Left cardiac atrium (tissue), 4 donors: ENCODE measurements at regions of chr1 and their contacts with region 1.

Region 1: DNA sequence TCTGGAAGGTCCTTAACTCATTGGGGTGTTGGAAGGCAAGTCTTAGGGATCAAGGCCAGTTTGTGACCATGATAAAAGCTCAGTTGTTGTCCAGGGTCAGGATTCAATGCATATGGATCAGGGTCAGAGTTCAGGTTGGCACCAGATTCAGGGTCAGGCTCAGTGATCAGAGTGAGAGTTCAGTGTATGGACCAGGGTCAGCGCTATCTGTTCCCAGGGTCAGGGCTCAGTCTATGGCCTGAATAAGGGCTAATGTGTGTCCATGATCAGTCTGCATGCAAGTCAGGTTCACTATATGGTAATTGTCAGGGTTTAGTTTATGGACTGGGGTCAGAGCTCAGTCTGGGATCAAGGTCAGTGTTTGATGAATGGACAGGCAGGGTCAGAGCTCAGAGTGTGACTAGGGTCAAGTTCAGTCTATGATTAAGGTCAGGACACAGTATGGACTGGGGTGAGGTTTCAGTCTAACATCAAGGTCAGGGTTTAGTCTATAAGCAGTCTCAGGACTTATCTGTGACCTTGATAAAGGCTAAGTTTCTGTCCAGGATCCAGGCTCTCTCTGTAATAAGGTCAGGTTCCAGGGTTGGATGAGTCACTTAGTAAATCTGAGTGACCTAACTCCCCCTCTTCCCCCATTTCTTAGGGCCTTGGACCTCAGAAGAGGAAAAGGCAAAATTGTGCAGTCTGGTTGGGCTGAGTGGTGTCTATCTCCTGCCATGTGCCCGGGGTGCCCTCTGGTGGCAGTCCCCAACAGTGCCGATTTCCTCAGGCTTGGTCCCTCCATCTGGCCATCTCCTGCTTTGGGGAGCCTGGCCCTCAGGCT is 23.8 kb downstream of the KNCN start:
- DNase-seq: peak; percentile 79
- ATAC-seq: peak; percentile 79 to 86

Region 2: DNA sequence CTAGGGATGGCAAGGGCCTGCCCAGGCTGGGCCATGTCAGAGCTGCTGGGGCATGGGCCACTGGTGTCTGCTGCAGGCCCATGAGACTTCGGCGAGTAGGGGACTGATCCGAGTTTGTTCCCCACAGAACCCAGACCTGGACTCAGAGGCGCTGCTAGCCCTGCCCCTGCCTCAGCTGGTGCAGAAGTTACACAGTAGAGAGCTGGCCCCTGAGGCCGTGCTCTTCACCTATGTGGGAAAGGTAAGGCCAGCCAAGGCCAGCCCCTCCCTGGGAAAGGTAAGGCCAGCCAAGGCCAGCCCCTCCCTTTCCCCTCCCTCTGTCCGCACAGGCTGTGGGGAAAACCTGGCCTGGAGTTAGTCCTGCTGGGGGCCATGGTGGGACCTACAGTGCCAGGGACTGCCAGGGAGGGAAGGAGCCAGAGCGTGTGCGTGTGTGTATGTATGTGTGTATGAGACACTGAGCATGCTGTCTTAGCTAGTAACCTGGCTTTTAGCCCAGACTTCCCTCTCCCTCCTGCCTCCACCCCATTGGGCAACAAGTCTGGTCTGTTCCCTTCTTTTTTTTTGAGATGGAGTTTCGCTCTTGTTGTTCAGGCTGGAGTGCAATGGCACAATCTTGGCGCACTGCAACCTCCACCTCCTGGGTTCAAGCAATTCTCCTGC is 125.6 kb before region 1 on chr1:
- intact Hi-C with region 1: loop called (anchors 2 to 10 kb)
- DNase-seq: peak; percentile 61
- ATAC-seq: peak; percentile 85 to 88

Region 3: DNA sequence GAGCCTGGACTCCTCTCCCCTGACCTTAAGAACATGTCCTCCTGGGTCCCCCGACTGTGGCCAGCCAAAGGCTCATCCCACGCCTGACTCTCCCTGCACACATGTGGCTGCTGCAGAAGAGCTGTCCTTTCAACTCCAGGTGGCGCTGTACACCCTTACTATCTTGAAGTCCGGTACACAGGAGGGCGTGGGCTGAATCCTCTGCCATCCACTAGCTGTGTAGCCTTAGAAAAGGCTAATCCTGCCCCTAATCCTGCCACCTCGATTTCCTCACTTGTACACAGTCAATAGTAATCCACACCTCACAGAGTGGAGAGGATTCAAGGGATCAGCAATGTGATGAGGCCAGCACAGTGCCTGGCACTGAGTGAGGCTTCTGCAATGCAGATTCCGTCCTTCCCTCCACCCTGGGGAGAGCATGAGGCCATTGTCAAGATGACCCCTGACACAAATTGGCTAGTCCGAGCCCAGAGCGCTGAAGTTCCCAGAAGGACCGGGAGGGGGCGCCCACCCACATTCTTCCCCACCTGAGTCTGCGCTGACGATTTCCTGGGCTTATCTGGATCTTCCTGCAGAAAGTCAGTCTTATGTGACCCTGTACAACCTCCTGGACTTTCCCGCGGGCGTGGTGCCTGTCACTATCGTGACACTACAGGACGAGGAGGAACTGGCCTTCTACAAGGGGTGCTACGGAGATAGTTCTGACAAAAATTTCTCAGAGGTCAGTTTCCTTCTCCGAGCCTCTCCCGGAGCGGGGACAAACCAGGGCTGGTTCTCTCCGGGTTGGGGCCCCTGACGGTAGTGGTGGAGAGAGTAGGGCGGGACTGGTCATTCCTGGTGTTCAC is 85.1 kb before region 1 on chr1:
- intact Hi-C with region 1: loop called (anchors 1 to 10 kb)
- DNase-seq: peak; percentile 78
- ATAC-seq: peak; percentile 76 to 78

Region 4: GRCh38 chr1:46477153-46477929 is 50.3 kb before region 1 on chr1:
- intact Hi-C with region 1: loop called (anchors 2 to 5 kb)
- DNase-seq: peak; percentile 66
- ATAC-seq: peak; percentile 75 to 77

Region 5: DNA sequence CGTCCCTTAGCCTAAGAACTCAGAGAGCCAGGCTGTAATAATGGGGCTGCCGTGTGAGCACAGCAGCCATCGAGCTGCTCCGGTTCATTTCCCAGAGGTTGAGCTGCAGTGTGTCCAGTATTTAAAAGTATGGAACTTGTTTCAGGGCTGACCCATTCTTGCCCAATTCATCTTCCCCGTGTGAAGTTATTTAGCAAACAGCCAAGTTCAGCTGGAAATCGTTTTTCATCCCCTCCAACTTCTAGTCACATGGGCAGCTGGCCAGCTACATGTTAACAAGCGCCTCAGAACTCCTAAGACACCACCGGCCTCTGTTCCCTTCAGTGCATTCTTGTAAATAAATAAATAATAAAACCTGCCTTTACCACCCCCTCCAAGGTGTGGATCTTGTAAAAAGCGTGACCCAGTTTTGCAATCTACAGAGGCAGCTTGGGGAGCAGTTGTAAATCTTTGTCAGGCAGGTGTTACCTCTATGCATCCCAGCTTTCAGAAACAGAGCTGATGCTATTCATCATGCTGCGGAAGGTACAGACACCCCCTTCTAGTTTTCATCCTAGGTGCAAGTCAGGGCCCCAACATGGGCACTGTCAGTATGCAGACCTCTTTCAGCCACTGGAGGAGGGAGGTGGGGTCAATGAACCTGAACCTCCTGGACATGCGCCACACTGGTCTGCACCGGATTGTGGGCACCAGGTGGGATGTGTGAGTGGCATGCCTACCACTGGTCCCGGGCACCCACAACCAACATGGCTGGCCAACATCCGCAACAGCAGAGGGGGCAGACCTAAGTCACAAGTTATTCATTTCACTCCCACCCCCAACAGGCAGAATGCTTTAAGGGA is 42.4 kb after region 1 on chr1:
- intact Hi-C with region 1: no loop called
- DNase-seq: no peak
- ATAC-seq: no peak

Region 6: GRCh38 chr1:46581681-46582455 is 54.2 kb after region 1 on chr1:
- intact Hi-C with region 1: no loop called
- DNase-seq: no peak
- ATAC-seq: peak; percentile 10 to 17

Region 7: GRCh38 chr1:46724991-46725735 is 197.5 kb after region 1 on chr1:
- intact Hi-C with region 1: loop called (anchors 2 to 10 kb)
- DNase-seq: peak; percentile 54
- ATAC-seq: peak; percentile 89 to 94